ENCODE measurements at regions of chr18 and their contacts with region 1.

Region 1: GRCh38 chr18:51153659-51154371 is 43.7 kb downstream of the MEX3C start:
- DNase-seq: no peak
- ATAC-seq: peak in 1 of 4 donors; percentile 13
- H3K4me3 ChIP-seq: peak overlapping the region in 1 of 12 donors; percentile 31
- H3K27ac ChIP-seq: peak overlapping the region in 1 of 12 donors; percentile 58
- H3K4me1 ChIP-seq: peaks cover 0 to 7% (median 0%) of the 10 kb centered on the region in 12 donors
- H3K27me3 ChIP-seq: no peaks in the 10 kb centered on the region
- CTCF ChIP-seq: no peak
- POLR2A ChIP-seq: no peak

Region 2: GRCh38 chr18:51029694-51030536 is 123.9 kb before region 1 on chr18 and contains the start of gene SMAD4:
- intact Hi-C with region 1: no loop called
- DNase-seq: peak; percentile 96 to 99 (median 97)
- ATAC-seq: peak; percentile 95 to 98 (median 96)
- H3K4me3 ChIP-seq: peak within 1 kb of the TSS; percentile 54 to 97 (median 79)
- H3K27ac ChIP-seq: peak within 1 kb of the TSS; percentile 92 to 99 (median 98)
- H3K4me1 ChIP-seq: peaks cover 11 to 75% (median 46%) of the 10 kb centered on the region in 12 donors
- H3K27me3 ChIP-seq: no peaks in the 10 kb centered on the region
- CTCF ChIP-seq: peak in 1 of 12 donors; percentile 13
- POLR2A ChIP-seq: peak in 1 of 2 donors; percentile 86
- total RNA-seq, gene SMAD4: 78.6 to 103 (median 92.0) TPM

Region 3: DNA sequence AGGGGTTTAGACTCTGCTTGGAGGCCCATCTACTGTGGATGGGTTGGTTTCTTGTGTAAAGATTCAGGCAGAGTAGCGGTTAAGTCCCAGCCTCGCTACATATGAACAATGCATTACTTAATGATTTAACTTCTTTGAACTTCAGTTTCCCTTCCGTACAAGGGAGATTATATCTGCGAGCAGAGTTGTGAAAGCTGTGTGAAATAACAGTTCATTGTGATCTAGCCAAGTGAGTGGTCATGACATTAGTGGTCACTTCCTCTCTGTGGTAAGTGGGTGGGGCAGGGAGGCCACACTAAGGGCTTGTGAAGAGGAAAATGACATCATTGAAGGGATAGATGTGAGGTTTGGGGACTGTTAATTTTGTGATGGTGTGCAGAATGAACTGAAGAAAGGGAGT is 57.7 kb after region 1 on chr18:
- intact Hi-C with region 1: loop called in 1 of 10 experiments (anchors 10 kb)
- DNase-seq: peak; percentile 26 to 63 (median 51)
- ATAC-seq: peak; percentile 64 to 99 (median 96)
- H3K4me3 ChIP-seq: no peak overlapping the region
- H3K27ac ChIP-seq: peak overlapping the region in 2 of 12 donors; percentile 41 to 53
- H3K4me1 ChIP-seq: peaks cover 0 to 17% (median 0%) of the 10 kb centered on the region in 12 donors
- H3K27me3 ChIP-seq: no peaks in the 10 kb centered on the region
- CTCF ChIP-seq: no peak
- POLR2A ChIP-seq: no peak

Region 4: GRCh38 chr18:51339856-51340255 is 186.0 kb after region 1 on chr18:
- intact Hi-C with region 1: no loop called
- DNase-seq: no peak
- ATAC-seq: no peak
- H3K4me3 ChIP-seq: no peak overlapping the region
- H3K27ac ChIP-seq: no peak overlapping the region
- H3K4me1 ChIP-seq: no peaks in the 10 kb centered on the region
- H3K27me3 ChIP-seq: no peaks in the 10 kb centered on the region
- CTCF ChIP-seq: no peak
- POLR2A ChIP-seq: no peak